GM13977 (cell line): ENCODE measurements at regions of chr11 and their contacts with region 1.

Region 1: GRCh38 chr11:110032259-110032658 is 60.9 kb upstream of the ZC3H12C start:
- DNase-seq: no peak
- CTCF ChIP-seq: no peak

Region 2: DNA sequence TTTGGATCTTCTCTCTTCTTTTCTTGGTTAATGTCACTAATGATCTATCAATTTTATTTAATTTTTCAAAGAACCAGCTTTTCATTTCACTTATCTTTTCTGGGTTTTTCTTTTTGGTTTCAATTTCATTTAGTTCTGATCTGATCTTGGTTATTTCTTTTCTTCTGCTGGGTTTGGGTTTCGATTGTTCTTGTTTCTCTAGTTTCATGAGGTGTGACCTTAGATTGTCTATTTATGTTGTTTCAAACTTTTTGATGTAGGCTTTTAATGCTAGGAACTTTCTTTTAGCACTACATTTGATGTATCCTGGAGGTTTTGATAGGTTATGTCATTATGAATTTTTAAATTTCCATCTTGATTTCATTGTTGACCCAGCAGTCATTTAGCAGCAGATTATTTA is 468.0 kb before region 1 on chr11:
- in situ Hi-C with region 1: no loop called
- DNase-seq: no peak
- CTCF ChIP-seq: no peak

Region 3: GRCh38 chr11:110071197-110071596 is 38.9 kb after region 1 on chr11:
- in situ Hi-C with region 1: loop called (anchors 5 kb)
- DNase-seq: no peak
- CTCF ChIP-seq: no peak

Region 4: GRCh38 chr11:110200241-110200640 is 168.0 kb after region 1 on chr11:
- in situ Hi-C with region 1: no loop called
- DNase-seq: no peak
- CTCF ChIP-seq: no peak